ENCODE measurements at regions of chrX and their contacts with region 1.

Region 1: DNA sequence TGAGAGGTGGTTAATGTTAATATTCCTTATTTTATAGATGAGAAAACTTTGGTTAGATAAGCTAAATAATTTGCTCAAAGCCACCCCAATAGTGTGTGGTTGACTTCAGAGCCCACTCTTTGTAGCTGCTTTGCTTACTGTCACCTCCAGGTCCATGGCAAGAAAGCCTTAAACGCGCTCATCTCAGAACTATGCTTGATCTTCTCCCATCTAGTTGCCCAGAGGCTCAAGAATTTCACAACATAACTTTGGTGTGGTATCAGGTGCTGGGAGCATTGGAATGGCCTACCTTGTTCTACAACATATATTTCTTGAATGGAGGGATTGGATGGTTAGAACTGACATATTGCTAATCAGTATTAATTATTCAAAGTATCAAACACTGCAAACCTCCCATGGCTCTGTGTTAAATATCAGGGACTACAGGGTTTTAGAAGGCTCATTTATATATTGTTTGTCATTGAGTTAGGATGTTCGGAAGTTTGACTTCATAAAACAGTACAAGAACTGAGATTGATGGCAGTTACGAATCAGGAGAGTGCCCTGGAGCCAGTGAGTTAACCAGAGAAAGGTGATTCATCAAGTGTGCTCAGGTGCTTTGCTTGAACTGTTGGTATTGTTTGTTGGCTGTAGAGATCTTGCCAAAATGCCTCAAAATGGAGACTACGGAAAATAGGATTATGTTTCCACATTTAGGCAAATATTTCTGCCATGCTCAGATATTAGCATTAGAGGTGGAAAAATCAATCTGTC is 7.4 kb upstream of the GPR101 start:
- DNase-seq: no peak
- ATAC-seq: no peak
- H3K4me3 ChIP-seq: no peak overlapping the region
- H3K27ac ChIP-seq: no peak overlapping the region
- H3K4me1 ChIP-seq: no peaks in the 10 kb centered on the region
- H3K27me3 ChIP-seq: no peaks in the 10 kb centered on the region
- CTCF ChIP-seq: no peak
- POLR2A ChIP-seq: no peak
- RAD21 ChIP-seq: no peak

Region 2: GRCh38 chrX:136353519-136354095 is 687.5 kb before region 1 on chrX:
- CTCF ChIA-PET with region 1: no interaction called
- POLR2A ChIA-PET with region 1: no interaction called
- dilution Hi-C with region 1: no loop called
- in situ Hi-C with region 1: no loop called
- intact Hi-C with region 1: no loop called
- DNase-seq: no peak
- ATAC-seq: no peak
- H3K4me3 ChIP-seq: no peak overlapping the region
- H3K27ac ChIP-seq: no peak overlapping the region
- H3K4me1 ChIP-seq: no peaks in the 10 kb centered on the region
- H3K27me3 ChIP-seq: no peaks in the 10 kb centered on the region; the same call in none of the 2 replicates
- CTCF ChIP-seq: no peak
- POLR2A ChIP-seq: no peak
- RAD21 ChIP-seq: no peak

Region 3: GRCh38 chrX:136816970-136817369 is 224.2 kb before region 1 on chrX:
- CTCF ChIA-PET with region 1: no interaction called
- POLR2A ChIA-PET with region 1: no interaction called
- dilution Hi-C with region 1: no loop called
- in situ Hi-C with region 1: no loop called
- intact Hi-C with region 1: no loop called
- DNase-seq: peak; percentile 47
- ATAC-seq: peak; percentile 66
- H3K4me3 ChIP-seq: no peak overlapping the region
- H3K27ac ChIP-seq: peak overlapping the region; percentile 44; the same call in 1 of the 2 replicates
- H3K4me1 ChIP-seq: peaks cover 3% of the 10 kb centered on the region
- H3K27me3 ChIP-seq: no peaks in the 10 kb centered on the region
- CTCF ChIP-seq: no peak
- POLR2A ChIP-seq: no peak
- RAD21 ChIP-seq: no peak

Region 4: GRCh38 chrX:137062915-137063617 is 21.9 kb after region 1 on chrX:
- CTCF ChIA-PET with region 1: no interaction called
- POLR2A ChIA-PET with region 1: interaction called, 12 read pairs
- dilution Hi-C with region 1: no loop called
- in situ Hi-C with region 1: no loop called
- intact Hi-C with region 1: no loop called
- DNase-seq: no peak
- ATAC-seq: no peak
- H3K4me3 ChIP-seq: no peak overlapping the region
- H3K27ac ChIP-seq: no peak overlapping the region
- H3K4me1 ChIP-seq: no peaks in the 10 kb centered on the region
- H3K27me3 ChIP-seq: no peaks in the 10 kb centered on the region; the same call in 1 of the 2 replicates
- CTCF ChIP-seq: no peak
- POLR2A ChIP-seq: no peak
- RAD21 ChIP-seq: no peak

Measured in IMR-90 (cell line).